ENCODE measurements at regions of chr11 and their contacts with region 1.

Region 1: DNA sequence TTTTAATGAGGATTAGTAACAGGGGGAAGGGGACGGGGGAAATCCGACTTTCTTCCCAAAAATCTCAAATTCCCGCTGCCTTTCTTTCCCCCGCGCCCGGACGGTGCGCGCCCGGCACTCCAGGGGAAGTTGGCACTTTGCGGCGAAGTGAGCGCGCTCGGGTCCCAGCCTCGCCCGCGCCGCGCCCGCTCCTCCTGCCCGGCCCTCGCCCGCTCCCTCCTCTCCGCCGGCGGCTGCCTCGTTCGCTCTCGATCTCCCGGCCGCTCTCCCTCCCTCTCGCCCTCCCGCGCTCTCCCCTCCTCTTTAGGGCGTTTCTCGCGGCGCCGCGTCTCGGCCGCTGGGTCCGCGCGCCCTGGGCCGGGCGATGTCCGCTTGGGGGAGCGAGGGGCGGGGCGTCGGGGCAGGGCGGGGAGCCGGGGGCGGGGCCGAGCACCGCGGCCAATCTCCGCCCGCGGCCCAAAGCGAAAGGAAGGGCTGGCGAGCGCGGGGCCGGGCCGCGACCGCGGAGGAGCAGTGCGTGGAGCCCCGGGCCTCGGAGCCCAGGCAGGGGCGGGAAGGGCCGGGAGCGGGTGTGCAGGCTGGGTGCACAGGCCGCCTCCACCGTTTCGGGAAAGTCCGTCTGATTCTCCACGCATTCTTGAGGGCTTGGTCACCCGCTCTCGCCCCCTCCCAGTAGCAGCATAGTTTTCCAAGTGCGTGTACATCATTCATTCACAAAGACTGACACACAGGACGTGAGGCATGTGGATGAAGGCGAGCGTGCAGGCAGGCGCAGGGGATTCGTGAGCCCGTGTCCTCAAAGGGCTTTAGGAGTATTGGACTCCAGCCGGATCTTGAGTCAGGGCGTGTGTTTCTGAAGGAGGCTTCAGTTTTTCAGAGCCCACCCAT is 65.1 kb downstream of the ETS1 start:
- DNase-seq: peak; percentile 87 to 93
- ATAC-seq: peak; percentile 76 to 93 (median 83)
- H3K4me3 ChIP-seq: peak overlapping the region; percentile 93
- H3K4me3 Mint-ChIP-seq: peak overlapping the region; percentile 98
- H3K27ac ChIP-seq: peak overlapping the region; percentile 90
- H3K27ac Mint-ChIP-seq: peak overlapping the region; percentile 98 to 99
- H3K4me1 ChIP-seq: peaks cover 34% of the 10 kb centered on the region
- H3K4me1 Mint-ChIP-seq: peaks cover 62 to 70% of the 10 kb centered on the region in 2 donors
- H3K27me3 ChIP-seq: no peaks in the 10 kb centered on the region
- H3K27me3 Mint-ChIP-seq: no peaks in the 10 kb centered on the region
- CTCF ChIP-seq: no peak

Region 2: GRCh38 chr11:128039140-128040021 is 482.9 kb before region 1 on chr11:
- intact Hi-C with region 1: loop called (anchors 5 kb)
- DNase-seq: peak; percentile 63 to 91
- ATAC-seq: peak; percentile 84 to 93 (median 92)
- H3K4me3 ChIP-seq: peak overlapping the region; percentile 7
- H3K4me3 Mint-ChIP-seq: peak overlapping the region; percentile 84
- H3K27ac ChIP-seq: peak overlapping the region; percentile 78
- H3K27ac Mint-ChIP-seq: peak overlapping the region; percentile 82 to 89
- H3K4me1 ChIP-seq: peaks cover 63% of the 10 kb centered on the region
- H3K4me1 Mint-ChIP-seq: peaks cover 34 to 49% of the 10 kb centered on the region in 2 donors
- H3K27me3 ChIP-seq: no peaks in the 10 kb centered on the region
- H3K27me3 Mint-ChIP-seq: no peaks in the 10 kb centered on the region
- CTCF ChIP-seq: peak; percentile 44

Region 3: DNA sequence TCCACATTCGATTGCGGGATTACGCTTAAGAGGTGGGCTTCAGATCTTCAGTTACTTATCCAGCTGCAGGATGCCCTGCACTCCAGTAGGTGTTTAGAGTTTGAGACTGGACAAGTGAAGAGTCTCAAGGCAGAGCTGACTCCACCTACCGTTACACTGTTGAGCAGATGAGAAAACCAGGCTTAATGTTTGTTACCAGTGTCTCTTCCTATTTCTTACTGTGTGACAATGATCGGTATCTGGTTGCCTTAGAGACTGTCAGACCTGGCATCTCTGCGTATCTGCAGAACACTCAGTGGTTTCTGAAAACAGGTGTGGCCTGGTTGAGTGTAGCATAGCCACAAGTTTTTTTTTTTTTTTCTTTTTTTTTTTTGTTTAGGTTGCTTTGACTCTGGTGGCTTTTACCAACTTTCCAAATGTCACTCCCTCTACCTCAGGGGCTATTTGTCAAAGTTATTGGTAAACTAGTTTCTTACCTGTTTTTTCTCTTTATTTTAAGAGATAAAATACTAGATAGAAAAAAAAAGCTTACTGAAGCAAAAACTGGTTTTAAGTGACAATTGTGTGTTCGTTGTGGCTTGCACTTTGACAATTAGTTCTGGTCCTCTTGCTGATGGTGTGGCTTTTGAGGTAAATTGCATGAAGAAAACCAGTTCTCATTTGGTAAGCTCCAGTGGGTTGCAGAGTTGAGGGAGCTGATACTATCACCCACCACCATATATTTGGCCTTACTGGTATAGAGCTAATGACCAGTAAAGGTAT is 219.7 kb before region 1 on chr11:
- intact Hi-C with region 1: loop called (anchors 1 kb)
- DNase-seq: peak; percentile 51 to 95
- ATAC-seq: peak; percentile 81 to 95 (median 88)
- H3K4me3 ChIP-seq: peak overlapping the region; percentile 20
- H3K4me3 Mint-ChIP-seq: peak overlapping the region; percentile 87
- H3K27ac ChIP-seq: peak overlapping the region; percentile 88
- H3K27ac Mint-ChIP-seq: peak overlapping the region; percentile 96 to 99
- H3K4me1 ChIP-seq: peaks cover 52% of the 10 kb centered on the region
- H3K4me1 Mint-ChIP-seq: peaks cover 85 to 89% of the 10 kb centered on the region in 2 donors
- H3K27me3 ChIP-seq: no peaks in the 10 kb centered on the region
- H3K27me3 Mint-ChIP-seq: no peaks in the 10 kb centered on the region
- CTCF ChIP-seq: peak; percentile 23

Region 4: DNA sequence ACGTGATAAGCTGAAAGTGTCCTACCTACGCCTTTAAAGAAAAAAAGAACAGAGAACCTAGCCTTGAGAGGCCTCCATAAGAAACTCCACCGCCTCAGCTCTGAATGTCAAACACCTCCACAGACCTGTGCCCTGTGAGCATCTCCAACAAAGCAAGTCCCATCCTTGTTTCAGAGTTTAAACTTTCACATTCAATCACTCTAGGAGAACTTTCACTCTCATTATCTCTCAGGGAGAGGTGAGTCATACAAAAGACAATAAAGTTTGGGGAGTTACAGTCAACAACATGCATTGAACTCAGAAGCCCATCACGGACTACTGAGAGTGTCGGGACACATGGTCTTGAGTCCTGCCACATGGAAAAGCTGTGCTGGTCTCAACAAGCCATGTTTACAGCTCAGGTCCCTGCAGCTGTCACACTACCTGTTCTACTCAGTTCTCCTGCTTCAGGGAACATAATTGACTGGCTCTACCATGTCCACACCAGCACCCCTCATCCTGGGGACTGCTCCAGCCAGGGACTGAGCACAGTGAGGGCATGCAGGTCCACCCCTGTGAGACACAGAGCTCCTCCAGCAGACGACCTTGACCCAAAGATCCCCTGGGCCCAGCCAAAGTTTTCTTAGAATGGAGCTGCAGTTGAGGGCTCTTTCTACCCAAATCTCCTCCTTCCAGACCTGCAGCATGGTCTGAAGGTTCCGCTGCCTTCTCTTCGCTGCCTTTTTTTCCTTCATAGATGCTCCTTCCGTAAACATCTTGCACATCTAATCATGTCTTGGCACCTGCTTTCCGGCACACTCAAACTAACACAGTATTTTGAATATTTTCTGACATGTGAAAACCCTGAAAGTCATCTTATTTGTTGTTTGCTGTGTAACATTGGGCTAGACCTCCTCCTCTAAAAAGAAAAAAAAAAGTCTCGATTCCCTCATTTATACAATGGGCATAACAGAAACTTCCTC is 49.9 kb before region 1 on chr11:
- intact Hi-C with region 1: loop called (anchors 1 kb)
- DNase-seq: peak in 1 of 2 donors; percentile 75
- ATAC-seq: peak; percentile 14 to 53 (median 46)
- H3K4me3 ChIP-seq: no peak overlapping the region
- H3K4me3 Mint-ChIP-seq: peak overlapping the region; percentile 86
- H3K27ac ChIP-seq: peak overlapping the region; percentile 92
- H3K27ac Mint-ChIP-seq: peak overlapping the region; percentile 98 to 99
- H3K4me1 ChIP-seq: peaks cover 81% of the 10 kb centered on the region
- H3K4me1 Mint-ChIP-seq: peaks cover 99% of the 10 kb centered on the region in 2 donors
- H3K27me3 ChIP-seq: no peaks in the 10 kb centered on the region
- H3K27me3 Mint-ChIP-seq: no peaks in the 10 kb centered on the region
- CTCF ChIP-seq: no peak

Region 5: GRCh38 chr11:128624269-128625175 is 102.2 kb after region 1 on chr11:
- intact Hi-C with region 1: loop called (anchors 1 kb)
- DNase-seq: peak; percentile 57 to 82
- ATAC-seq: peak; percentile 68 to 82 (median 73)
- H3K4me3 ChIP-seq: no peak overlapping the region
- H3K4me3 Mint-ChIP-seq: peak overlapping the region; percentile 78
- H3K27ac ChIP-seq: peak overlapping the region; percentile 83
- H3K27ac Mint-ChIP-seq: peak overlapping the region; percentile 93 to 97
- H3K4me1 ChIP-seq: peaks cover 69% of the 10 kb centered on the region
- H3K4me1 Mint-ChIP-seq: peaks cover 72 to 77% of the 10 kb centered on the region in 2 donors
- H3K27me3 ChIP-seq: no peaks in the 10 kb centered on the region
- H3K27me3 Mint-ChIP-seq: no peaks in the 10 kb centered on the region
- CTCF ChIP-seq: no peak

Region 6: GRCh38 chr11:128725630-128726319 is 203.5 kb after region 1 on chr11:
- intact Hi-C with region 1: loop called (anchors 10 kb)
- DNase-seq: peak; percentile 54 to 92
- ATAC-seq: peak; percentile 65 to 75 (median 70)
- H3K4me3 ChIP-seq: peak overlapping the region; percentile 16
- H3K4me3 Mint-ChIP-seq: peak overlapping the region; percentile 74
- H3K27ac ChIP-seq: peak overlapping the region; percentile 72
- H3K27ac Mint-ChIP-seq: peak overlapping the region; percentile 86 to 94
- H3K4me1 ChIP-seq: peaks cover 99% of the 10 kb centered on the region
- H3K4me1 Mint-ChIP-seq: peaks cover 98 to 100% of the 10 kb centered on the region in 2 donors
- H3K27me3 ChIP-seq: no peaks in the 10 kb centered on the region
- H3K27me3 Mint-ChIP-seq: peaks cover 0 to 3% of the 10 kb centered on the region in 2 donors
- CTCF ChIP-seq: no peak

Measured in natural killer cell (primary cell).